ENCODE measurements at regions of chr9 and their contacts with region 1.

Region 1: GRCh38 chr9:34994260-34994899 is 4.8 kb downstream of the DNAJB5 start:
- DNase-seq: peak; percentile 54
- ATAC-seq: peak; percentile 11
- H3K4me3 Mint-ChIP-seq: peak overlapping the region; percentile 6; the same call in 1 of the 2 replicates
- H3K27ac Mint-ChIP-seq: peak overlapping the region; percentile 76
- H3K4me1 Mint-ChIP-seq: peaks cover 52% of the 10 kb centered on the region
- H3K27me3 Mint-ChIP-seq: no peaks in the 10 kb centered on the region; the same call in 1 of the 2 replicates
- CTCF ChIP-seq: peak; percentile 49

Region 2: DNA sequence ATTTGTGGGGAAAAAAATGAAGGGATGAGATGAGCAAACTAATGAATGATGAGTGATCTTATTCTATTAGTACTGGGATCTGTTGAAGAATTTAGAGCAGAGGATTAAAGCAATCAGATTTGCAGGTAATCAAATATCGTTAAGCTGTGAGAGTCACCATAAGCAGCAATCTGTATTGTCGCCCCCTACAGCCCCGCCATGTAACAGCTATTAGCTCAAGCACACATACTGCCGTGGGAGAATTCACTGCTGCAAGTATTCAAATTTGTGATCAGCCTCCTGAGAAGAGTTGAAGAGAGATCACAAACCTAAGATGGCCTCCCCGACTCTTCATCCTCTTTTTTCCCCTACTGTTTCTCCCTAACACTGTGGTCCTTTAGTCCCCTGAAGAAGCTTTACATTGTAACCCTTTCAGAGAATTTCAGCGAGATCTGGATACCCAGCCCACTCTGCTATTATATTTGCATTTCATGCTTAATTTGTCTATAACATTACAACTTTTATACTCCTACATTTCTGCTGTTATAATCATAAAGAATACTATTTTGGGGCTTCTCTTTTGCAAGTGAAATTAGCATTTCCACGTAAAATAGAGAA is 64.8 kb before region 1 on chr9:
- CTCF ChIA-PET with region 1: interaction called, 16 read pairs
- POLR2A ChIA-PET with region 1: no interaction called
- DNase-seq: peak; percentile 68
- ATAC-seq: peak; percentile 97
- H3K4me3 Mint-ChIP-seq: no peak overlapping the region
- H3K27ac Mint-ChIP-seq: no peak overlapping the region
- H3K4me1 Mint-ChIP-seq: no peaks in the 10 kb centered on the region; the same call in 1 of the 2 replicates
- H3K27me3 Mint-ChIP-seq: peaks cover 5% of the 10 kb centered on the region
- CTCF ChIP-seq: peak; percentile 63

Region 3: DNA sequence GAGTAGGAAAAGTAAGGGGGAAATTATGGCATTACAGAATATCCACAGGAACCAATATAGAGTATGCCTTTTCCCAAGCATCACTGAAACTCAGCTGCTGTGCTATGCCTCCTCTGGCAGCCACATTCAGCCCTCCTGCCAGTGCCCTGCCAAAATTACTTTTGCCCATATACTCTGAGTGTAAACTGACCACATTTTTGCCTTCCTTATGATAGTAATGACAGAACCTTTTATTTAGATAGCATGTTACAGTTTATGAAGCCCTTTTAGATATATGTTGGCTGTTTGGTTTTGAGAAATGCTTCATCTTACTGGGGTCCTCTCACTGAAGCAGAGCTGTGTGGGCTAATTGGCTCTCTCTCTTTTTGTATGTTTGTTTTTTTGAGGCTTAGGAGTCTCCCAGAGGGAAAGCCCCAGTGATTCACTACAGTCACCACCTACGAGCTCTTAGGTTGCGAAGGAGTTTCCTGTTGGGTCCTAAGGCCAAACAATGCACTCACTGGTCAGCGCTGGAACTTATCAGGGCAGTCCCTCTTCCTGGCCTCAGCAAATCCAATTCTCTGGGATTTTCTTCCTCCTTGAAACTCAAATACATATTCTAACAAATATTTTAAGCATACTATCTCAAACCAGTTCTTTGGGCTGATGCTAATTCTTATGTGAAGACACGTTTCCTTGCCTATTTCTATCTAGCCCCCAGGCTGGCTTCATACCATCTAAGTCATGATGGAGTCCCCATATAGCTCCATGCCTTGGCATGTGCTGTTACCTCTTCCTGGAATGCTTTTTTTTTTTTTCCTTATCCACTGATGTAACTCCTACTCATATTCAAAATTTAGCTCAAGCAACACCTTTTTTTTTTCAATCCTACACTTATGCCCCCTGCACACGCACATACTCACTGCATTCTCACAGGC is 32.5 kb before region 1 on chr9:
- CTCF ChIA-PET with region 1: interaction called, 10 read pairs
- POLR2A ChIA-PET with region 1: no interaction called
- DNase-seq: no peak
- ATAC-seq: no peak
- H3K4me3 Mint-ChIP-seq: no peak overlapping the region
- H3K27ac Mint-ChIP-seq: no peak overlapping the region
- H3K4me1 Mint-ChIP-seq: peaks cover 19% of the 10 kb centered on the region
- H3K27me3 Mint-ChIP-seq: peaks cover 42% of the 10 kb centered on the region
- CTCF ChIP-seq: no peak

Region 4: GRCh38 chr9:35044061-35044460 is 49.7 kb after region 1 on chr9:
- CTCF ChIA-PET with region 1: interaction called, 16 read pairs
- POLR2A ChIA-PET with region 1: interaction called, 3 read pairs
- DNase-seq: peak; percentile 21
- ATAC-seq: peak; percentile 83
- H3K4me3 Mint-ChIP-seq: no peak overlapping the region
- H3K27ac Mint-ChIP-seq: no peak overlapping the region
- H3K4me1 Mint-ChIP-seq: peaks cover 20% of the 10 kb centered on the region
- H3K27me3 Mint-ChIP-seq: no peaks in the 10 kb centered on the region
- CTCF ChIP-seq: no peak

Region 5: GRCh38 chr9:35051069-35051967 is 56.9 kb after region 1 on chr9:
- CTCF ChIA-PET with region 1: interaction called, 41 read pairs
- POLR2A ChIA-PET with region 1: interaction called, 5 read pairs
- DNase-seq: peak; percentile 71
- ATAC-seq: peak; percentile 84
- H3K4me3 Mint-ChIP-seq: no peak overlapping the region
- H3K27ac Mint-ChIP-seq: peak overlapping the region; percentile 54
- H3K4me1 Mint-ChIP-seq: peaks cover 3% of the 10 kb centered on the region; the same call in 1 of the 2 replicates
- H3K27me3 Mint-ChIP-seq: no peaks in the 10 kb centered on the region
- CTCF ChIP-seq: peak; percentile 68

Region 6: GRCh38 chr9:35071814-35072460 is 77.6 kb after region 1 on chr9:
- CTCF ChIA-PET with region 1: interaction called, 26 read pairs
- POLR2A ChIA-PET with region 1: interaction called, 10 read pairs
- DNase-seq: peak; percentile 85
- ATAC-seq: peak; percentile 68
- H3K4me3 Mint-ChIP-seq: peak overlapping the region; percentile 93
- H3K27ac Mint-ChIP-seq: peak overlapping the region; percentile 96
- H3K4me1 Mint-ChIP-seq: peaks cover 24% of the 10 kb centered on the region
- H3K27me3 Mint-ChIP-seq: no peaks in the 10 kb centered on the region
- CTCF ChIP-seq: no peak

Region 7: DNA sequence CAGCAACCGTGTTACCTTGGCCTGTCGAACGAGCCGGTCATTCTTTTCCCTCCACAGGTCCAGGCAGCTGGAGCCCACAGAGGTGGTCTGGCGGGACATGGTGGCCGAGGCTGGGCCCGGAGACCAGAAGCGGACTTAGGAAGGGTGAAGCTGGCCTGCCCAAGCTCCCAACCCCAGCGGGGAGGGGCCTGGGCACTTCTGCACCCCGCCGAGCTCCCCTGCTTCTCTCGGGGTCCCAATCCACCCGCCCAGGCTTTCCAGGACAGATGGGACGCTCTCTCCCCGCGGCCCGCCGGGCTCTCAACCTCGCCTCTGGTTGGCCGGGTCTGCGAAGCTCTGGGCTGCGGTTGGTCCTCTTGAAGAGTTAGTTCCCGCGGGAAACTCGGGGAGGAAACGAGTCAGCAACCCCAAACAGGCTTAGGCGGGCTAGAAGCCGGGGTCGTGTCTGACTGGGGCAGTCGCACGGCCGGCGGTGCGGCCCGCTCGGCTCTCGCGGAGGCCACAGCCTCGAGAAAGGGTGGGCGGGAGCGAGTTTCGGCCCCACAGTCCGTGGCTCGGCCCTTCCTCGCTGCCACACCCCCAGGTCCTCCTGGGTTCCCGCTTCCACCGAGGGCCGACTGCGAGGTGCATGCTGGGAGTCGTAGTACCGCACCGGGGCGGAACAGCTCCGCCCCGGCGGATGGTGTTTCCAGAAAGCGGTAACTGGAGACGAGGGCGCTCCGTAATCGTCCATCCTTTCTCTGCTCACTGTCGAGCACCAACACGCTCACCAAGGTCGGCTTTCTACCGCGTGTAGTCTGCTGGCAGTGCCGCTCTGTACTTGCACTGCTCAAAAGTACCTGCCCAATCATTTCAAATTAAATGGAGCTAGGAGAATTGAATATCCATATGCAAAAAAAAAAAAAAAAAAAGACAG is 85.3 kb after region 1 on chr9 and contains the start of gene FANCG:
- CTCF ChIA-PET with region 1: interaction called, 10 read pairs
- POLR2A ChIA-PET with region 1: interaction called, 9 read pairs
- DNase-seq: peak; percentile 89
- ATAC-seq: peak; percentile 92
- H3K4me3 Mint-ChIP-seq: peak within 1 kb of the TSS; percentile 92
- H3K27ac Mint-ChIP-seq: peak within 1 kb of the TSS; percentile 99
- H3K4me1 Mint-ChIP-seq: peaks cover 15% of the 10 kb centered on the region
- H3K27me3 Mint-ChIP-seq: no peaks in the 10 kb centered on the region
- CTCF ChIP-seq: no peak
- total RNA-seq, gene FANCG: 80.9 to 108 TPM (median 89.1 TPM) in 3 replicates

Region 8: DNA sequence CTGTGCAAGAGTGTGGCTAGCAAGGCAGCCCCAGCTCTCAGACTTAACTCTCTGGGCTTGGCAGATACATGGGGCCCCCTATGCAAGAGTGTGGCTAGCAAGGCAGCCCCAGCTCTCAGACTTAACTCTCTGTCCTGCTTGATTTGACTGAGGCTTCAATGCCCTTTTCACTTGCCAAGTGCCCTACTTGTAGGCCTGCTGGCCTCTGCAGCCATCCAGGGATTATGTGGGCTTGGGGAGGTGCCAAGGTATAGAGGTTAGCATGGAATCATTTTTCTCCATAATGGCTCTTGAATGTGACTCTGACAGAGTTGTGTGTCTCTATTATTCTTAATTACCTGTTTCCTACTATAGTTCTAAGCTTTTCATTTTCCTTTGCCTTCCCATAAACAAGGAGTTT is 380.1 kb after region 1 on chr9:
- CTCF ChIA-PET with region 1: no interaction called
- POLR2A ChIA-PET with region 1: no interaction called
- DNase-seq: no peak
- ATAC-seq: no peak
- H3K4me3 Mint-ChIP-seq: no peak overlapping the region
- H3K27ac Mint-ChIP-seq: no peak overlapping the region
- H3K4me1 Mint-ChIP-seq: no peaks in the 10 kb centered on the region
- H3K27me3 Mint-ChIP-seq: no peaks in the 10 kb centered on the region
- CTCF ChIP-seq: no peak